PC-3 (cell line): ENCODE measurements at regions of chr3 and their contacts with region 1.

Region 1: DNA sequence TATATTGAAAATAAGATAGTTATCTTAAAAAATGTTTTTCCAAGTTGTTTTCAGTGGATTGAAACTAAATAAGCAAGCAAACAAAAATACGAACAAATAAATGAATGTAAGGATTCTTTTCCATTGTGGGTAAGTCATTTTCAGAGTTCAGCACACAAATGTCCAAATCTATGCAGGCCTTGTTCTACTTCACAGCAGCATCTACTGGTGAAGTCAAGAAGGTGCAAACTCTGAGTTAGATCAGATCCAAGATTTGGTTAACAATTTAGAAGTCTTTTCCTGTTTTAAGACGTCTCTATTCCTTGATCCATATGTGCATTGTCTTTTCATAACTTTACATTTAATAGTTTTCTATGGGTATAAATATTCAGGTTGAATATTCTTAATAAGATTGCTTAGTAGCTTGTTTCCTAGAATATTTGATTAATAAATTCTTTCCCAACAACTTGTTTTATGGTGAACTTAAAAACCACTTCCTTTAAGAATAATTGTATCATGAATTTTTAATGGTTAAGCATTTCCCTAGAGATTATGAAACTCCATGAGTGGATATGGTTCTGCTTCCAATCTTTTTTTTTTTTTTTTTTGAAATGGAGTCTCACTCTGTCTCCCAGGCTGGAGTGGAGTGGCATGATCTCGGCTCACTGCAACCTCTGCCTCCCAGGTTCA is 10.5 kb downstream of the PTX3 start:
- DNase-seq: peak; percentile 69
- ATAC-seq: peak; percentile 78
- H3K4me3 ChIP-seq: no peak overlapping the region
- H3K27ac ChIP-seq: no peak overlapping the region
- H3K4me1 ChIP-seq: peaks cover 16% of the 10 kb centered on the region; the same call in 1 of the 2 replicates
- H3K27me3 ChIP-seq: no peaks in the 10 kb centered on the region
- CTCF ChIP-seq: peak; percentile 86

Region 2: GRCh38 chr3:157274644-157275137 is 172.5 kb before region 1 on chr3:
- CTCF ChIA-PET with region 1: no interaction called
- POLR2A ChIA-PET with region 1: no interaction called
- intact Hi-C with region 1: loop called (anchors 5 kb)
- DNase-seq: peak; percentile 83
- ATAC-seq: peak; percentile 93
- H3K4me3 ChIP-seq: no peak overlapping the region
- H3K27ac ChIP-seq: peak overlapping the region; percentile 38
- H3K4me1 ChIP-seq: peaks cover 10% of the 10 kb centered on the region
- H3K27me3 ChIP-seq: no peaks in the 10 kb centered on the region
- CTCF ChIP-seq: no peak

Region 3: DNA sequence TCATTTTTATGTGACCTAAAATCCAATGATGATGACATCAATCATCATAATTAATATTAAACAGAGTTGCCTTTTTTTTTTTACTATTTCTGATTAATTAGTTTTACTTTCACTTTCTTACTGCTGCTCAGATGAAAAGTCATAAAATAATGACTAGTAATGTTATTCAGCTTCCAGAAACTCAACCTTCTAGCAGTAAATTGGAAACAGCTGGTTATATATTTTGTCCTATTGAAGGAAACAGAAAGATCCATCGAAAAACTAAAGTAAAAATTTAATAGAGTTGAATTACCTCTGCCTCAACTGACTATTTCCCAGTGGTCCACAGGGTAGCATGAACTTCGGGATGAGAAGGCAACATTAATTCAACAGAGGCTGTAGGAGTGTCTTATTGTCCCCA is 117.6 kb before region 1 on chr3:
- CTCF ChIA-PET with region 1: no interaction called
- POLR2A ChIA-PET with region 1: no interaction called
- intact Hi-C with region 1: loop called (anchors 5 kb)
- DNase-seq: no peak
- ATAC-seq: no peak
- H3K4me3 ChIP-seq: no peak overlapping the region
- H3K27ac ChIP-seq: no peak overlapping the region
- H3K4me1 ChIP-seq: peaks cover 16% of the 10 kb centered on the region
- H3K27me3 ChIP-seq: no peaks in the 10 kb centered on the region
- CTCF ChIP-seq: no peak

Region 4: DNA sequence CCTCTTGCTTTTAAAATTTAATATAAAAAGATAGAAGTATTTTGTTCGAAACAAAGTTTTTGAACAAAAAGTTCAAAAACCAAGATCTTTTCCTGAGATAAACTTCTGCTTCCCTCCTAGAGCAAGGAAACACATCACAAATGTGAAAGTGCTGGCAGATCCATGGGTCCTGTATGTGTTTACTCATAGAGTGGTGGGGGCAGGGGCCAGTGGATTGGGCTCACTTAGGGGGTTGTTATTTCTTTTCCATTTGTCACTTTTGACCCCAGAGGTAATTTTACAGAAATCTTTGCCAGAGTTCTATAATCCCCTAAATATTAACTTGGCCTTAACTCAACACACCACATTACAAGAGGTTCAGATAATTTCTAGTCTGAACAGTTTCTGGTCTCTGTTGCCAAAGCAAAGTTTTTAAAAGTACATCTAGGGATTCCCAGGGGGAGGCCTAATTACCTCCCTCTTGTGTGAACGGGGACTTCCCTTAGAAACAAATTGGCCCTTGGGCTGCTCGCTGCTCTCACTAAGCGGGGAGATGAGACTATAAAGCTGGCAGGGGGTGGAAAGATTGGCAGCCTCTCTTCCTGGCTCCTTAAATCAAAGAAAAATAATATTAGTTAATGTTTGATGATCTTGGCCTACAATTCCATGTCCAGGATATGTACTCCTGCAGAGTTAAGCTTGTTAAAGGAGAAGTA is 77.3 kb before region 1 on chr3:
- CTCF ChIA-PET with region 1: no interaction called
- POLR2A ChIA-PET with region 1: no interaction called
- intact Hi-C with region 1: loop called (anchors 5 kb)
- DNase-seq: no peak
- ATAC-seq: no peak
- H3K4me3 ChIP-seq: no peak overlapping the region
- H3K27ac ChIP-seq: no peak overlapping the region
- H3K4me1 ChIP-seq: peaks cover 7% of the 10 kb centered on the region
- H3K27me3 ChIP-seq: no peaks in the 10 kb centered on the region
- CTCF ChIP-seq: no peak

Region 5: GRCh38 chr3:157469561-157470294 is 22.6 kb after region 1 on chr3:
- CTCF ChIA-PET with region 1: interaction called, 5 read pairs
- POLR2A ChIA-PET with region 1: no interaction called
- intact Hi-C with region 1: loop called (anchors 2 kb)
- DNase-seq: peak; percentile 23
- ATAC-seq: peak; percentile 80
- H3K4me3 ChIP-seq: no peak overlapping the region
- H3K27ac ChIP-seq: 0 out of 2 replicates have a peak overlapping the region, but pooled peaks have one; percentile 7
- H3K4me1 ChIP-seq: peaks cover 30% of the 10 kb centered on the region
- H3K27me3 ChIP-seq: no peaks in the 10 kb centered on the region
- CTCF ChIP-seq: no peak

Region 6: DNA sequence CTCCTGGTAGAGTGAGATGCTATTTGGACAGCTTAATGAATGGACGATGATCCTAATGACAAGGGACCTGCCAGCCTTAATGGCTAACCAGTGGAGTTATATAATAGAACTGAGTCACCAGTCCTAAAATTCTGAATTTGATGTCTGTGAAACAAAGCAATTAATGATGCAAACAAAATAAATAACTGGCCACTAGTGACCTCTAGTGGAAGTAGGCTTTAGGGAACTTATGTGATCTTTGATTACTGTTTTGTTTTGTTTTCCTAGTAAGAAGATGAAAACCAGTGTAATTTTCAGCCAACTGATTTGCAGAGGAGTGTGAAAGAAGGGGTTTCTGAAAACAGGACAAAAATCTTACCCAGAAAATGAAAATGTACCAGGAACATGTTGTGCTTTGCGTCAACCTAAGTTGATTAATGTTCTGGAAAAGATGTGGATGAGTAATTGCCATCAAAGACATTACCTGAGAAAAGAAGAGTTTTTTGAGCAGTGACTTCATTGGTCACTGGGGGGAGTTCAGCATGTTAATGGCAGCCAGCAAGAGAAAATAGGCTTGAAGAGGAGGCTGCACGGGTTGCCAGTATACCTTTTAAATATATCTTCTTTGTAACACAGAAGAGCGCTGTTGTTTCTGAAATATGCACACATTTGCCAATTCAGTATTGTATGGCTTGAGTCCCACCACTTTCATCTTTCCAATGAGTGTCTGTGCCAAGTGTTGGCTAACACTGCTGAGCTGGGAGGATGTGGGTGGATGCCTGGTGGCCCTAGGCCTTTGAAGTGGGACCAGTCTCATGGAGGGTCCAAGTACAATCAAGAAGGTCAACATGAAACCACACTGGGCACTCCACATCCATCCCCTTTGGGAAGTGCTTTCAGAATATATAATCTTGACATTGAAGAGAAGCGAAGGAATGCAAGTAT is 46.7 kb after region 1 on chr3:
- CTCF ChIA-PET with region 1: no interaction called
- POLR2A ChIA-PET with region 1: no interaction called
- intact Hi-C with region 1: loop called (anchors 1 kb)
- DNase-seq: peak; percentile 83
- ATAC-seq: peak; percentile 68
- H3K4me3 ChIP-seq: no peak overlapping the region
- H3K27ac ChIP-seq: no peak overlapping the region
- H3K4me1 ChIP-seq: peaks cover 11% of the 10 kb centered on the region
- H3K27me3 ChIP-seq: no peaks in the 10 kb centered on the region
- CTCF ChIP-seq: peak; percentile 92